B cell (primary cell): ENCODE measurements at regions of chr12 and their contacts with region 1.

Region 1: GRCh38 chr12:112992541-112993398 is 14.5 kb downstream of the OAS2 start:
- DNase-seq: peak; percentile 73
- ATAC-seq: peak; percentile 76
- H3K4me3 ChIP-seq: no peak overlapping the region
- H3K4me3 Mint-ChIP-seq: no peak overlapping the region
- H3K27ac ChIP-seq: peak overlapping the region in 1 of 2 donors; percentile 40
- H3K27ac Mint-ChIP-seq: peak overlapping the region; percentile 53
- H3K4me1 ChIP-seq: peaks cover 8 to 12% of the 10 kb centered on the region in 2 donors
- H3K4me1 Mint-ChIP-seq: peaks cover 24% of the 10 kb centered on the region
- H3K27me3 ChIP-seq: no peaks in the 10 kb centered on the region
- H3K27me3 Mint-ChIP-seq: no peaks in the 10 kb centered on the region
- CTCF ChIP-seq: peak; percentile 90

Region 2: GRCh38 chr12:112900299-112901145 is 92.2 kb before region 1 on chr12:
- CTCF ChIA-PET with region 1: interaction called, 54 read pairs
- POLR2A ChIA-PET with region 1: no interaction called
- intact Hi-C with region 1: no loop called
- DNase-seq: peak; percentile 70
- ATAC-seq: no peak
- H3K4me3 ChIP-seq: no peak overlapping the region
- H3K4me3 Mint-ChIP-seq: no peak overlapping the region
- H3K27ac ChIP-seq: no peak overlapping the region
- H3K27ac Mint-ChIP-seq: peak overlapping the region; percentile 56
- H3K4me1 ChIP-seq: peaks cover 8 to 31% of the 10 kb centered on the region in 2 donors
- H3K4me1 Mint-ChIP-seq: peaks cover 38% of the 10 kb centered on the region
- H3K27me3 ChIP-seq: peaks cover 0 to 3% (median 0%) of the 10 kb centered on the region in 4 experiments
- H3K27me3 Mint-ChIP-seq: peaks cover 19% of the 10 kb centered on the region
- CTCF ChIP-seq: peak; percentile 85

Region 3: DNA sequence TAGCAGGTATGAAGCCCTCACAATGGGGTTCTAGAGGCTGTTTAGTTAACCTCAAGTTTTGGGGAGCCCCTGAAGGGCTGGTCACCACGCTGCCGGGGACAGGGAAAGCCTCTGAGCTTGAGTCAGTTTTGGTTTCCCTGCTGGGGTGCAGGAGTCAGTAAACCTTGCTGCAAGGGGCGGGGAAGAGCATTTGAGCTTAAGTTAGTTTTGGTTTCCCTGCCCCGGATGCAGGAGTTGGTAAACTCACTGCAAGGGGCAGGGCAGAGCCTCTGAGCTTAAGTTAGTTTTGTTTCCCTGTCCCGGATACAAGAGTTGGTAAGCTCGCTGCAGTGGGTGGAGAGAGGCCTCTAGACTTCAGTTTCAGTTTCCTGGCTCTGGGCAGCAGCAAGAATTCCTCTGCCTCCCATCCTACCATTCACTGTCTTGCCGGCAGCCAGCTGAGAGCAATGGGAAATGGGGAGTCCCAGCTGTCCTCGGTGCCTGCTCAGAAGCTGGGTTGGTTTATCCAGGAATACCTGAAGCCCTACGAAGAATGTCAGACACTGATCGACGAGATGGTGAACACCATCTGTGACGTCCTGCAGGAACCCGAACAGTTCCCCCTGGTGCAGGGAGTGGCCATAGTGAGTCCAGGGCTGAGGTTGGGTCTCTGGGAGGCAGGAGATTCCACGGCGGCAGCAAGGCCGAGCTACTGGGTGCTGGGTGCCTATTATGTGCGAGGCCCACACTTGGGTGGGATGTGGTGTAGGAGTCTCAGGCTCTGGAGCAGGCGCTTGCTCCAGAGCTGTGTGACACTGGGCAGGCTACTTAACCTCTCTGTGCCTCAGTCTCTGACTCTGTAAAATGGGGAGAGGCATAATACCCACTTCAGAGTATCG is 14.4 kb before region 1 on chr12 and contains the start of gene OAS2:
- CTCF ChIA-PET with region 1: interaction called, 50 read pairs
- POLR2A ChIA-PET with region 1: interaction called, 7 read pairs
- intact Hi-C with region 1: loop called (anchors 2 kb)
- DNase-seq: peak; percentile 92
- ATAC-seq: peak; percentile 94
- H3K4me3 ChIP-seq: peak within 1 kb of the TSS; percentile 70 to 94 (median 78)
- H3K4me3 Mint-ChIP-seq: peak within 1 kb of the TSS; percentile 98
- H3K27ac ChIP-seq: peak within 1 kb of the TSS; percentile 90 to 94
- H3K27ac Mint-ChIP-seq: peak within 1 kb of the TSS; percentile 98
- H3K4me1 ChIP-seq: peaks cover 39 to 40% of the 10 kb centered on the region in 2 donors
- H3K4me1 Mint-ChIP-seq: peaks cover 59% of the 10 kb centered on the region
- H3K27me3 ChIP-seq: no peaks in the 10 kb centered on the region
- H3K27me3 Mint-ChIP-seq: no peaks in the 10 kb centered on the region
- CTCF ChIP-seq: no peak
- total RNA-seq, gene OAS2: 57.4 and 59.3 TPM in 2 replicates

Region 4: GRCh38 chr12:113022563-113023297 is 30.0 kb after region 1 on chr12:
- CTCF ChIA-PET with region 1: interaction called, 10 read pairs
- POLR2A ChIA-PET with region 1: no interaction called
- intact Hi-C with region 1: no loop called
- DNase-seq: no peak
- ATAC-seq: no peak
- H3K4me3 ChIP-seq: no peak overlapping the region
- H3K4me3 Mint-ChIP-seq: no peak overlapping the region
- H3K27ac ChIP-seq: no peak overlapping the region
- H3K27ac Mint-ChIP-seq: no peak overlapping the region
- H3K4me1 ChIP-seq: no peaks in the 10 kb centered on the region
- H3K4me1 Mint-ChIP-seq: no peaks in the 10 kb centered on the region
- H3K27me3 ChIP-seq: no peaks in the 10 kb centered on the region
- H3K27me3 Mint-ChIP-seq: no peaks in the 10 kb centered on the region
- CTCF ChIP-seq: no peak

Region 5: GRCh38 chr12:113092607-113093408 is 100.0 kb after region 1 on chr12:
- CTCF ChIA-PET with region 1: interaction called, 38 read pairs
- POLR2A ChIA-PET with region 1: no interaction called
- intact Hi-C with region 1: loop called (anchors 2 kb)
- DNase-seq: peak; percentile 72
- ATAC-seq: peak; percentile 69
- H3K4me3 ChIP-seq: peak overlapping the region in 3 of 5 experiments; percentile 5 to 58 (median 38)
- H3K4me3 Mint-ChIP-seq: peak overlapping the region; percentile 74
- H3K27ac ChIP-seq: peak overlapping the region; percentile 56 to 62
- H3K27ac Mint-ChIP-seq: peak overlapping the region; percentile 68
- H3K4me1 ChIP-seq: peaks cover 54 to 61% of the 10 kb centered on the region in 2 donors
- H3K4me1 Mint-ChIP-seq: peaks cover 58% of the 10 kb centered on the region
- H3K27me3 ChIP-seq: no peaks in the 10 kb centered on the region
- H3K27me3 Mint-ChIP-seq: no peaks in the 10 kb centered on the region
- CTCF ChIP-seq: peak; percentile 36